ENCODE measurements at regions of chr3 and their contacts with region 1.

Region 1: DNA sequence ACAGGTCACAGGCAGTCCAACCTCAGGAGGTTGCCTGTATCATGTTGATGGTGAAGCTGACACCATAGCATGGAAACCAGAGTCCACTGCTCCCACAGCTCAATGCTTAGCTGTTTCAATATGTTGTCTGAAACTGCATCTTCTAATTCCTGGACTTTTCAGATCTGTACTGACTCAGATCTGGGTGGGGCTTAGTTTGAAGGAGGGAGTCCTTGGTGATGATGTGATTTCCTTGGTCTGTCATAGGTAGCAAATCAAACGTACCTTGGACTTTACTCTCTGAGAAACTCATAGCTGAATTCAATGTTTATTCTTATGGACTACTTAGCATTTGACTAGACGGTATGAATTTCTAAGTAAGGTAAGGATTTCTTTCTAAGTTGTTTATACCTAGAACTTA is at the start of gene HHLA2:
- DNase-seq: peak in 1 of 3 donors; percentile 47
- ATAC-seq: peak; percentile 79
- H3K4me3 ChIP-seq: peak within 1 kb of the TSS; percentile 4
- H3K4me1 ChIP-seq: no peaks in the 10 kb centered on the region
- CTCF ChIP-seq: no peak
- total RNA-seq, gene HHLA2: 98.2 to 276 (median 169) TPM

Region 2: GRCh38 chr3:108145578-108145977 is 150.7 kb before region 1 on chr3:
- intact Hi-C with region 1: no loop called
- DNase-seq: no peak
- ATAC-seq: no peak
- H3K4me3 ChIP-seq: no peak overlapping the region
- H3K4me1 ChIP-seq: no peaks in the 10 kb centered on the region
- CTCF ChIP-seq: no peak

Region 3: GRCh38 chr3:108234387-108234957 is 61.8 kb before region 1 on chr3:
- intact Hi-C with region 1: no loop called
- DNase-seq: no peak
- ATAC-seq: no peak
- H3K4me3 ChIP-seq: no peak overlapping the region
- H3K4me1 ChIP-seq: no peaks in the 10 kb centered on the region
- CTCF ChIP-seq: no peak

Region 4: GRCh38 chr3:108406661-108407206 is 110.5 kb after region 1 on chr3:
- intact Hi-C with region 1: loop called in 1 of 2 experiments (anchors 5 kb)
- DNase-seq: peak in 1 of 3 donors; percentile 83
- ATAC-seq: peak; percentile 85
- H3K4me3 ChIP-seq: no peak overlapping the region
- H3K4me1 ChIP-seq: peaks cover 30% of the 10 kb centered on the region
- CTCF ChIP-seq: peak; percentile 41